Posterior vena cava (tissue), 2 donors: ENCODE measurements at regions of chr9 and their contacts with region 1.

Region 1: GRCh38 chr9:35653611-35654010 is 2.9 kb upstream of the SIT1 start:
- DNase-seq: no peak

Region 2: DNA sequence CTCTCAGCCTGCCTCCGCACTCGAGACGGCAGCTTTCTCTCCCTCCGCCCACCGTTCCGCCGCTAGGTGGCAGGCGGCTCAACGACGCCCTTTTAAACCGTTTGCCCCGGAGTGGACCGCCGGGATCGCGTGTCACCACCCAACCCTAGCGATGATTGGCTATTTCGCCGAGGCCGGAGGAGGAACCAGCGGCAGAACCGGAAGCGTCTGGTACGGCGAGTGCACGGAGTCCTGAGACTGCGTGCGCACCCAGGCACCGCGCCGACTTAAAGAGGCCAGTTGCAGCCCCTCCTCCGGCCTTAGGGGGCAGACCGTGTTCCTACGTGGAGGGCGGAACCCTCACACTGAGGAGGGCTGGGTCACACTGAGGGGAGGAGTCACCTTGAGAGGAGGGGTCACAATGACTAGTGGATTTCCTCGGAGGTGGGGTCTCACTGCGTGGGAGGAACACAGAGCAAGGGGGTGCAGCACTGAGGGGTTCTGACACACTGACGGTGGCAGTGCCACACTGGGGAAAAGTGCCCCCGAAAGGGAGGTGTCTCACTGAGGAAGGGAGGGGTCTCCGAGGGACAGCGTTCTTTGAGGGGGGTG is 49.5 kb before region 1 on chr9:
- intact Hi-C with region 1: loop called in 1 of 2 experiments (anchors 2 kb)
- DNase-seq: peak; percentile 100

Region 3: GRCh38 chr9:35680331-35681105 is 26.9 kb after region 1 on chr9:
- intact Hi-C with region 1: no loop called
- DNase-seq: peak; percentile 59

Region 4: DNA sequence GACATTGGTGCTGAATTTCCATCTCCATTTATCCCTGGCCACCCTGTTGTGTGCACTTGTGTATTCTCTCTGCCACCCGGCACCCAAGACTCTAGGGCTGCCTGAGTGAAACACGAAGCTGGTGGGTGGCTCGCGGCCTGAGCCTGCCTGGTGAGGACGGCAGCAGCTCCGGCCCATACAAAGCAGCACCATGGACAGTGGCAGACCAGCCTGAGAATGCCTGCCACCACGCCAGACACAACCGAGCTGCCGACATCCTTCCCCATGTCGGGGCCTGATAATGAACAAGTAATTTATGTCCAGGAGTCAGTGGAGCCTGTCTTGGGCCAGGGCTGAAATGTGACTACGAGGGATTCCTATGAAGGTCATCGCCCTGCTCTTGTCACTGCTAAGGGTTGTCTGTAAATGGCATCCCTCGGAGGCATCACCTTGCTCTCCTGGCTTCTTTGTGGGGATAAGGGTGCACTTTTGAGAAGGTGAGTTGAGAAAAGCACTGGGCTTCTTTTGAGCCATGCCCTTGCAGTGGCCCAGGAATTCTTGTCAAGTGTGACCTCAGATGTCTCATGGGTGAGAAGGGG is 1094.8 kb after region 1 on chr9:
- intact Hi-C with region 1: no loop called
- DNase-seq: no peak